ENCODE measurements at regions of chr17 and their contacts with region 1.

Region 1: DNA sequence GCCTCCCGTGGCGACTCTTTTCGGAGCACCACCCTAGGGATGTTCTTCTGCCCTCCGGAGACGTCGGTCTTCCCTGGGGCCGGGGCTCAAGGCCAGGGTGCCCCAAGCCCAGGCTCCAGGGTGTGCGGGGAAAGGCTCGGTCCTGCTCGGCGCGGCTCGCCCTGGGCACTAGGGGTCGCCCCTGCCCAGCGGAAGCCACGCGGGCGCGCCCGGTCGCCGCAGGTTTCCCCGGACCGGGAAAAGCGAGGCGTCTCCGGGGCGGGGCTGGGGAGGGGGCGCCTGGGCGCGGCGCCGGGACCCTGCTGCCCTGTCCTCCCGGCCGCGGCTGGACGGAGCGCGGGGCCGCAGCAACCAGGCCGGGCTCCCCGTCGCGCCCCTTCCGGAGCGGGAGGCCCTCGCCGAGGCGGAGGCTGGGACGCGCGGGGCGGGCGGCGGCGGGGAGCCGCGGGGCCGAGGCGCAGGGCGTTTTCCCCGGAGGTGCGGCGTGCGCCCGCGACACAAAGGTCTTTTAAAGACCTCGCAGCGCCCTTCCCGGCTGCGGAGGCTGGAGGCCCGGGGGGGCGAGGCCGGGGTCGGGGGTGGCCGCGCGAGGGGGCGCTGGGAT is 76.4 kb downstream of the MRC2 start:
- DNase-seq: peak; percentile 92

Region 2: DNA sequence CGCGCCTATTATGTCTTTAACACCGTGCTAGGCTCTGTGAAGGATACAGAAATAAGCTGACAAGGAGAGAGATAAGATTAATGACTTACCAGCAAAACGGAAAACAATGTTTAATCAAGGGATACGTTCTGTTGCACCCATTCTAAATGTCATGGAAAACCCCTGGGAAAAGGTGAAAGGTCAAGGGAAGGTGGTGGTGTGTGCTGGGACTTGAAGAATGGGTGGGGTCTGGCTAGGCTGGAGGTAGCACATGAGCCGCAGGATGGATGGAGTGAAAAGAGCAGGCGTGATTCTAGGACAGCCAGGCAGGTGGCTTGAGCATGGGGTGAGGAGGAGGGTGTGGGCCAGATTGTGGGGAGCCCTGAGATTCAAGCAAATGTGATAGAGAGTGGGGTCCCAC is 62.9 kb after region 1 on chr17:
- intact Hi-C with region 1: no loop called
- DNase-seq: peak; percentile 43

Region 3: DNA sequence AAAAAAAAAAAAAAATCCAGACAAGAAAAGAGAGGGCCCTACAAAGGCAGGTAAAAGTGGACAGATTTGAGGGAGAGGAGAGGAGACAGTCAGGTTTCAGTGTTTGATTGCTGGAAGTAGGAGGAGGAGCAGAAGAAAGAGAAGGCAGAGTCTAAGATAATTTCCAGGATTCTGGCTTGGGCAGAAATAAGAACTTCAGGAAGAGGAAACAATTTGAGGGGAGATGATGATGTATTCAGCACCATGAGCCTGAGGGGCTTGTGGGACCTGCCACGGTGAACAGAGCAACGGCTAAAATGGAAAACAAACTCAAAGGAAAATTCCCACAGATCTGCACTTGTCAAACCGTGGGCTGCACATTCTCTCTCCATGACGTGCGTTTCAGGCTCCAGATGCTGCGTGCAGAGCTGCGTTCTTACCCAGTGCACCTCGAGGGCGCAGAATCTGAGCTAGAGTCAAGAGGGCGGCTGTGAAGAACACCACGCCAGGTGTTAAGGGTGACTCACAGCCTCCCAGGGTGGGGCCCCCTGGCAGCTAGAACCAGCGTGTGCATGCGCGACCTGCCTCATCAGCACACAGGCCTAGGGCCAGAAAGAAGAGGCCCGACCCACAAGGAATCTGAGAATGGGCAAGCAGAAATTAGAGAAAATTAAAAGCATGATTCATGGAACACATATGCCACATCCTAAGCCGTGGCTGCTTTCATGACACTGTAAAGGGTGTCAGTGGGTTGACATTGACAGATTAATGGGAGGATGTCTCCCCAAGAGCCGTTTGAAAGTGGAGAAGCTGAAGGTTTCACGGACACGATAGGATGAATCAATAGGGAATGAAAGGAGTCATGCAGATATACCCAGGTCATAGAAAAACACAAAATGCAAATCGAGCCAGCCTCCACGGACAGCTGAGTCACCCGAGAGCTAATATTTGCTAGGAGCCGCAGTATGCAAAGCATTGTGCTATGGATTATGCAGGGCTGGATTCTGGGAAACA is 75.1 kb after region 1 on chr17:
- intact Hi-C with region 1: no loop called
- DNase-seq: no peak

Region 4: DNA sequence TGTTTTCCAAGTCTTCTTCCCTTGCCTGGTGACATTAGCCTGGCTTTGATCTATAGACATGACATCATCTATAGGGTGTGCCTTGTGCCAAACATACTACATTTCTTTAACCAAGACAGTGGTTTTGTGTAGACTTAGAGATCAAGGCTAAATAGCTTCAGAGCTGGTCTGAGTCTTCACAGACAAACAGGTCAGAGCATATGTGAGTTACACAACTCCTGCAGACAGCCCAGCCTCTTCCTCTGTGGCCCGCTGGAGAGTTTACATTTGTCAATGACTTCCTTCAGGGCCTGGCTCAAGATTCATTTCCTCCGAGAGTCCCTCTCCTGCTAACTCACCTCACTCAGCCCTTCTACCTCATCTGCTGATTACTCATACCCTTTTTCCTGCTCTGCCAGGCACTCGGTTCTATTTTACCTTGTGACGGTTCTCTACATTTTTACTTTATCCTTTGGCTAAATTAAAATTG is 189.0 kb after region 1 on chr17:
- intact Hi-C with region 1: loop called (anchors 10 kb)
- DNase-seq: peak; percentile 84

Region 5: GRCh38 chr17:62968445-62968923 is 264.6 kb after region 1 on chr17:
- intact Hi-C with region 1: loop called (anchors 1 kb)
- DNase-seq: no peak

Region 6: DNA sequence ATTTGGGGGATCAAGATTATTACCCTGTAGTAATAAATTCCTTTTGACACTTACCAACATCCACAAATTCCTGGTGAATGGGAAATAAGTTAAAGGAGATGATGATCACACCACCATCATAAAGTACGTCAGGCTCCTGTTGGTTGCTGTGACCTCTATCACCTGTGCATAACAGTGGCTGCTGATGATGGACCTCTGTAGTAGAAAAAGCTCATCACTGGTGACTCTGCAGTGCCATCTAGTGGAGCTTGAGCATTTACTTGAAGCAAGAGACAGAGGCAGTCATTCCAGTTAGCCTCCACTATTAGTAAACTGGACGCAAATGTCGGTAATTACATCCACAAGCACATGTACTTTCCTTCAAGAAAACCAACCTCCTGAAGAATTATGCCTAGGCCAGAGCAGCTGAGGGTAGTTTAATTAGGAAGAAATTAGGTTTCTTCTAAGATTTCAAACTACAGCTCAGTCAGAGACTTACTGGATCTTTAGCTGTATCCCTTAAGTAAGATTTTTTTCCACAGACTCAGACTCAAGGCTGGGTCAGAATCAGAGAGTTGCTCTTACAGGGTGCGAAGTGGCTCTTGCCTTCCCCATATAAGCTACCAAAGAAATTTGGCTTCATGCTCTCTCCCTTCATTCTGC is 702.9 kb after region 1 on chr17:
- intact Hi-C with region 1: loop called (anchors 5 kb)
- DNase-seq: no peak